Left ventricle myocardium inferior (tissue), 1 donor: ENCODE measurements at regions of chr21 and their contacts with region 1.

Region 1: GRCh38 chr21:38839328-38840286 is 33.9 kb downstream of the ETS2 start:
- DNase-seq: no peak
- H3K4me3 ChIP-seq: no peak overlapping the region
- H3K27ac ChIP-seq: no peak overlapping the region
- H3K4me1 ChIP-seq: no peaks in the 10 kb centered on the region
- H3K27me3 ChIP-seq: no peaks in the 10 kb centered on the region
- CTCF ChIP-seq: no peak

Region 2: DNA sequence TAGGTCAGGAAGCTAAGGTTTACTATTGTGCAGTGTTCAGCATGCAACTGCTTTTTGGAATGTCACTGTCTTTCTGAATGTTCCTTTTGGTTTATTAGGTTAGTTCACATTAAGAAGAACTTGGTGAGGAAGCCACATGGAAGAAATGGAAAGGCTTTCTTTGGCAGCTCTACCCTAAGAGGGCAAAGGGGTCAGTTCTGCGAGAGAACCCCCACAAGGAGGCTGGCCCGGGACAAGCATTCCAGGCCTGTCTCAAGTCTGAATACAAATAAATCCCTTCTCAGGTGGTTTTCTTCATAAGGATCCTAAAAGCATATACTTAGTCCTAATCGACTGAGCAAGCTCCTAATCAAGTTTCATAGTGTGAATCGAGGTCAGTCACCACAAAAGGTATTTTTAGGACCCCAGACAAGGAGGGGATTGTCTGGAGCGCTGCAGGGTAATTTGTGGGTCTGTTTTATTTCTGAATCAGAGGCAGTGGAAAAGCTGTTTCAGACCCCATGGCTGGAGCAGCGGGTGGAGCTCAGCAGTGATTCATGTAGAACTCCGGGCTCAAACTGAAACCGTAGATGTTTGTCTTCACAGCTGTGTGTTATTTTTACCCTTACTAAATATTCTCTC is 404.6 kb before region 1 on chr21:
- intact Hi-C with region 1: no loop called
- DNase-seq: no peak
- H3K4me3 ChIP-seq: peak overlapping the region; percentile 5
- H3K27ac ChIP-seq: no peak overlapping the region
- H3K4me1 ChIP-seq: peaks cover 45% of the 10 kb centered on the region
- H3K27me3 ChIP-seq: no peaks in the 10 kb centered on the region
- CTCF ChIP-seq: no peak

Region 3: GRCh38 chr21:38903690-38904139 is 64.1 kb after region 1 on chr21:
- intact Hi-C with region 1: loop called (anchors 10 kb)
- DNase-seq: no peak
- H3K4me3 ChIP-seq: no peak overlapping the region
- H3K27ac ChIP-seq: peak overlapping the region; percentile 71
- H3K4me1 ChIP-seq: peaks cover 39% of the 10 kb centered on the region
- H3K27me3 ChIP-seq: no peaks in the 10 kb centered on the region
- CTCF ChIP-seq: no peak